ENCODE measurements at regions of chr2 and their contacts with region 1.

Region 1: GRCh38 chr2:219459460-219460311 is 25.0 kb downstream of the SPEG start:
- DNase-seq: peak; percentile 69 to 86
- ATAC-seq: peak; percentile 67 to 78 (median 74)
- H3K4me3 ChIP-seq: peak overlapping the region; percentile 49
- H3K27ac ChIP-seq: peak overlapping the region; percentile 94
- H3K4me1 ChIP-seq: peaks cover 32% of the 10 kb centered on the region
- H3K27me3 ChIP-seq: no peaks in the 10 kb centered on the region
- CTCF ChIP-seq: peak; percentile 93

Region 2: DNA sequence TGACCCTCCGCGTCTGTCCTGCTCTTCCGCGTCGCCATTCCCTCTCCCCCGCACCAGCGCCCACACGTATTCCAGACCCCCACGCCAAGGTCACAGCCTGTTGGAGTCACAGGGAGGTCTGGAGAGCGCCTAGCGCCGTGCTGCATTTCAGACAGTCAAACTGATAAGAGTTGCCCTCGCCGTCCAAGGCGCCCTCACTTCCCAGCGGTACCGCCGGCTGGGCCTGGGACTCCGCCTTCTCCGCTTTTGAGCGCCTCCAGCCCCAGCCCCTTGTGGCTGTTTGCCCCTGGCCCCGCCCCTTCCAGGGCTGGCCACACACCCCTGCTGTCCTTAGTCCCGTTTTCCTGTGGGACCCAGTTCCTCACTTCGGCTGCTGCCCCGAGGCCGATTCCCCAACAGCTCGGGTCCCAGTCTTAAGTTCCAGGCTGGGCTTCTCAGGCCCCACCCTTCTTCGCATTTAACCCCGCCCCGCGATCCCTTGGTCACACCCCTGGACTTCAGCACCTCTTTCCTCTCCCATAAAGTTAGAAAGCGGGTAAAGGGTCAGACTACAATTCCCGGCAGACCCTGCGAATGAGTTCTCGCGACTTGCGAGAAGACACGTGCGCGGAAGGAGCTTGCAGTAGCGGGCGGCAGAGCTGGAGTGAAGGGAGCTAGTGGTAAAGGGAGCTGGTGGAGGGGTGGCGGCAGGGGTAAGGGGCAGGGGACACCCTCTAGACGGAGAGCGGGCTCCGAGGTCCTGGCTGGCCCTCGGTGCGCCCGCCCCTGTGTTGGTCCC is 38.8 kb after region 1 on chr2 and contains the start of gene GMPPA:
- intact Hi-C with region 1: loop called in 1 of 2 experiments (anchors 2 kb)
- DNase-seq: peak; percentile 95 to 97
- ATAC-seq: peak; percentile 73 to 79 (median 76)
- H3K4me3 ChIP-seq: peak within 1 kb of the TSS; percentile 86
- H3K27ac ChIP-seq: peak within 1 kb of the TSS; percentile 91
- H3K4me1 ChIP-seq: peaks cover 43% of the 10 kb centered on the region
- H3K27me3 ChIP-seq: no peaks in the 10 kb centered on the region
- CTCF ChIP-seq: peak; percentile 4
- total RNA-seq, gene GMPPA: 14.4 to 23.4 (median 18.2) TPM